ENCODE measurements at regions of chr3 and their contacts with region 1.

Region 1: DNA sequence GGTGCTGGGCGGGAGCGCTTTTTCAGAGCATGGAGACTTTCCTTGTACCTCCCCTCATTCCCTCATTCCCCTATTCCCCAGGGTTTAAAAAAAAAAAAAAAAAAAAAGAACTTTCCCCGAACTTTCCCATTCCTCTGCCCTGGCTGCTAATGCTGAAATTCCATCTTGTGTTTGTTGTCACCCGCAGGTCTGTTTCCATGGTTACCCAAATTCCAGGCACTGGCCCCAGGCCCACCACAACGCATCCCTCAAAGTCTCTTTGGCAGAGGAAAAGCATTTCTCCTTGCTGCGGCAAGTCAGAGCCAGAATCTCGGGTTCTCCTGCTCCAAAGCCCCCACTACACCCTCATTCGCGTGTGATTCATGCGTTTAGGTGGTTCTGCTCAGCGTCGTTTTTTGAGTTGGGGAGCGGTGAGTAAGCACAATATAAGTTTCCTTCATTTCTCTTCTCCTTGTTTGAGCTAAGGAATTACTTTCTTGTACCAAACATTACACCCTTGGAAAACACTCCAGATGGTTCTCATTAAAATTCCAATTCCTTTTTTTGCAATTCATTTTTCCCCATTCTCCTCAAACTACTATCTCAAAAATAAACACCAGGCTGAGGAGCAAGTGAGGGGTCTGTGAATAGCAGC is 21.6 kb downstream of the ANAPC13 start:
- DNase-seq: peak in 1 of 2 donors; percentile 95
- H3K4me3 ChIP-seq: no peak overlapping the region
- H3K27ac ChIP-seq: peak overlapping the region; percentile 71
- H3K4me1 ChIP-seq: peaks cover 46% of the 10 kb centered on the region
- H3K27me3 ChIP-seq: no peaks in the 10 kb centered on the region
- CTCF ChIP-seq: no peak
- POLR2A ChIP-seq: no peak

Region 2: DNA sequence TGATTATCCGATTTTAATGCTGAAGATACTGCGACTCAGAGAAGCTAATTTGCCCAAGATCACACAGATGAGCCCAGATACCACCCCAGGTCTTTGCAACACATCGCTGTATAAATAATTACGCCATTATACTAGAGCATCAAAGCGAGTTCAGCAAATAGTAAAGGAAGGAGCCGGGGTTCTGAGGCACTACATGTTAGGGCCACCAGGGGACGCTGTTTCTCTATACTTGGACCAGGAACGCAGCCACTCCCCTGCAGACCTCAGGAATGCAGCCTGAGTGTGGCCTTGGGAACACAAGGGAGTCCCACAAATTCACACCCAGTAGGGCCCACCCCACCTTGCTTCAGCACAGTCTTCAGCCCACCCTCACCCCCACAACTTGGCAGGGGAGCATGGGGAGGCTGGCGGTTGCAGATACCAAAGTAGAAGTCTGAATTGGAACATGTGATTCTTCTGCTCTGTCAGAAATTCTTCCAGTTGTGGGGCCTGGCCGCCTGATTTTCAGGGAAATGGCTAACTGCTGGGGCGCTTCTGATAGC is 155.8 kb before region 1 on chr3:
- intact Hi-C with region 1: loop called (anchors 5 kb)
- DNase-seq: no peak
- H3K4me3 ChIP-seq: peak overlapping the region in 1 of 2 donors; percentile 8
- H3K27ac ChIP-seq: peak overlapping the region; percentile 80
- H3K4me1 ChIP-seq: peaks cover 40% of the 10 kb centered on the region
- H3K27me3 ChIP-seq: no peaks in the 10 kb centered on the region
- CTCF ChIP-seq: peak; percentile 98 to 100 (median 99)
- POLR2A ChIP-seq: no peak

Measured in vagina (tissue), 2 donors.